Activated CD8-positive, alpha-beta T cell treated with anti-CD3 and anti-CD28 coated beads for 36 hours (primary cell): ENCODE measurements at regions of chr5 and their contacts with region 1.

Region 1: DNA sequence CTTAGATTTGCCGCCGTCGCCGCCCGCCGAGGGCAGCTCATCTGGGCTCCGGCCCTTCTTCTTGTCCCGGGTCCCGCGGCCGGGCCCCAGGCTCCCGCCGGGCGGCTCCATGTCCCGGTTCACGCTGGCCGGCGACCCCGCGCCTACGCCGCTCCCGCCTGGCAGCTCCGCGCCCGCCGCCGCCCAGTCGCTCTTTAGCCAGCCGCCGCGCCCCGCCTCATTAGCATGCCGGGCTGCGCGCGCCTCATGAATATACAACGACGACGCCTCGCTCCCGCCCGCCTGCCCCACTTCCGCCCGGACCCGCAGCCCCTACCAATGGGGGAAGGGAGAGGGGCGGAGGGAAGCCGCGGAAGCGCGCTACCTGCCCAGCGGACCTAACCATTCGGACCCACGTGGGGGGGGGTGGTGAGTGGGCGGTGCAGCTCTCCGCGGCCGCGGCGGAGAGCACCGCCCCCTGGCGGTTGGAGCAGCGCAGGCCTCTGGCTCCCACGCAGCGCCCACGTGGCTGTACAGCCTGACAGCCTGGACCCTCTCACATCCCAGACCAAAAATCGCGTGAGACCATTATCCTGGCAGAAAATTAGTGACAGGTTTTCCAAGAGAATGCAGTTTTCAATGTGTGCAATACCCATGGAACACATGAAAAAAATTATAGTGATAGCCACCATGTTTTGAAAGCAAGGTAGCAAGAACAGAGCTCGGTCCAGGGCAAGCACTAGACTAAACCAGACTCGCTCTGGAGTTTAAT is at the start of gene DIAPH1:
- DNase-seq: peak; percentile 99
- ATAC-seq: peak; percentile 90
- H3K4me3 Mint-ChIP-seq: peak within 1 kb of the TSS; percentile 99
- H3K27ac Mint-ChIP-seq: peak within 1 kb of the TSS; percentile 96
- H3K4me1 Mint-ChIP-seq: peaks cover 55% of the 10 kb centered on the region
- H3K27me3 Mint-ChIP-seq: no peaks in the 10 kb centered on the region
- CTCF ChIP-seq: peak; percentile 92
- total RNA-seq, gene DIAPH1: 209 to 218 TPM

Region 2: DNA sequence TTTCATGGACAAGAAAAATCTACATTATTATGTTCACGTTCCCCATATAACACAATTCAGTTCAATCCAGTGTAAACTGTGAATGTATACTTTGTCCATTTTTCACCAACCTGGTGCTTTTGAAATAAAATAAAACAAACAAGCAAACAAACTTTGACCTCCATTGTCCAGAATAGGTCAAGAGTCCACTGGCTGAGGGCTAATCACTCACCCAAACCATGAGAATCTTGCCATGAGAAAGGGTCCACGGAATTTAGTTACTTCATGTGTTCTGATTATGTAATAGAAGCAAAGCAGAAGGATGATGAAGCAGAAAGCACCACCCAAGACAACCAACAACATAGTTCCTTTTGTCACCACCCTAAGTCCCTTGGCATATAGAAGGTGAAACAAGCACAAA is 28.9 kb before region 1 on chr5:
- CTCF ChIA-PET with region 1: interaction called, 297 read pairs
- POLR2A ChIA-PET with region 1: interaction called, 37 read pairs
- intact Hi-C with region 1: loop called (anchors 1 kb)
- DNase-seq: no peak
- ATAC-seq: no peak
- H3K4me3 Mint-ChIP-seq: no peak overlapping the region
- H3K27ac Mint-ChIP-seq: no peak overlapping the region
- H3K4me1 Mint-ChIP-seq: peaks cover 43% of the 10 kb centered on the region
- H3K27me3 Mint-ChIP-seq: no peaks in the 10 kb centered on the region
- CTCF ChIP-seq: no peak

Region 3: DNA sequence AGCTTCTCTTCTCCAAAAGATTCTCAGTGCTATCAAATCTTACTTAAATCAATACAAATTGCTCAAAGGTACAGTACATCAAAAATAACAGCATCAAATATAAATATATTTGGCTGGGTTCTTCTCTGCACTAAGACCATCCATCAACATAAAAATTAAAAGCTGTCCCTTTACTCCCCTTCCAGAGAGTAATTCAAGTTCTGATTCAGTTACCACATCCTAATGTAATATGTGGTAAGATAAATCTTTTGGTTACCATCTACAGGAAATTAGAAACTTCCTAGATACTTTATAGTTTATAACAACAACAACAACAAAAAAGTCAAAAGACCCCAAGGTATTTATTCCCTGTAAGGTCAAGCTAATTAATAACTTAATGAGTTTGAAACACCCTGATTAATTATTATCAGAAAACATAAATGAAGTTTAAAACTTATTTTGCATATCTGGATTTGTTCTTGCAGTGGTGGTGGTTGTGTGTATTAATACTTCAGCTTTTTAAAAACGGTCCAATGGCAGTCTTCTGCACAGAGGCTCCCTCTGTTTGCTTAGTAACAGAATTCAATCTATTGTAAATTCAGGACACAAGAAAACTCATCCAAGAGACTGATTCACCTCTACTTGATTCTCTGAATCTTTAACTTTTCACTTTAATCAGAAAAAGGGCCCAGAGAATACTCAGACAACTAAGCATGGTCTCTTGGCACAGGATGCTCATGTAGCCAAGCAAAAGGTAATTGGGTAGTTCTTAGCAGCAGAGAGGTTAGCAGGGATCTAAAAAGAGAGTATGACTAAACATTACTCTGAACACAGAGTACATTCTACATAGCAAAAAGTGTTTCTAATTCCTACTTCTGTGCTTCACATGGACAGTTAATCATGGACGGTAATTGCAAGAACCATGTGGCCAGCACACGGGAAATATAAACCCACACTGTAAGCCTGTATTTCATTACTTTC is 20.3 kb before region 1 on chr5:
- CTCF ChIA-PET with region 1: interaction called, 297 read pairs
- POLR2A ChIA-PET with region 1: interaction called, 37 read pairs
- intact Hi-C with region 1: no loop called
- DNase-seq: no peak
- ATAC-seq: peak; percentile 88
- H3K4me3 Mint-ChIP-seq: no peak overlapping the region
- H3K27ac Mint-ChIP-seq: peak overlapping the region; percentile 71
- H3K4me1 Mint-ChIP-seq: peaks cover 72% of the 10 kb centered on the region
- H3K27me3 Mint-ChIP-seq: no peaks in the 10 kb centered on the region
- CTCF ChIP-seq: no peak

Region 4: GRCh38 chr5:141605523-141606277 is 13.3 kb before region 1 on chr5:
- CTCF ChIA-PET with region 1: interaction called, 132 read pairs
- POLR2A ChIA-PET with region 1: interaction called, 9 read pairs
- intact Hi-C with region 1: loop called (anchors 2 kb)
- DNase-seq: peak; percentile 88
- ATAC-seq: peak; percentile 93
- H3K4me3 Mint-ChIP-seq: peak overlapping the region; percentile 62
- H3K27ac Mint-ChIP-seq: peak overlapping the region; percentile 94
- H3K4me1 Mint-ChIP-seq: peaks cover 80% of the 10 kb centered on the region
- H3K27me3 Mint-ChIP-seq: no peaks in the 10 kb centered on the region
- CTCF ChIP-seq: no peak

Region 5: GRCh38 chr5:141681695-141682641 is 63.0 kb after region 1 on chr5 and contains the start of gene ARAP3:
- CTCF ChIA-PET with region 1: no interaction called
- POLR2A ChIA-PET with region 1: no interaction called
- intact Hi-C with region 1: no loop called
- DNase-seq: peak; percentile 54
- ATAC-seq: peak; percentile 73
- H3K4me3 Mint-ChIP-seq: peak within 1 kb of the TSS; percentile 72
- H3K27ac Mint-ChIP-seq: peak within 1 kb of the TSS; percentile 68
- H3K4me1 Mint-ChIP-seq: peaks cover 24% of the 10 kb centered on the region
- H3K27me3 Mint-ChIP-seq: no peaks in the 10 kb centered on the region
- CTCF ChIP-seq: no peak
- total RNA-seq, gene ARAP3: 5.9 to 7.2 TPM